Activated CD4-positive, alpha-beta T cell treated with anti-CD3 and anti-CD28 coated beads, Interleukin-2, amount 10 ng/mL, durations not matched to agents 7 days and 5 days (primary cell): ENCODE measurements at regions of chr3 and their contacts with region 1.

Region 1: GRCh38 chr3:52231502-52232293 is 6.3 kb upstream of the TLR9 start:
- DNase-seq: peak; percentile 78
- H3K4me3 Mint-ChIP-seq: peak overlapping the region; percentile 6
- H3K27ac Mint-ChIP-seq: peak overlapping the region; percentile 66
- H3K4me1 Mint-ChIP-seq: peaks cover 58% of the 10 kb centered on the region
- H3K27me3 Mint-ChIP-seq: no peaks in the 10 kb centered on the region

Region 2: DNA sequence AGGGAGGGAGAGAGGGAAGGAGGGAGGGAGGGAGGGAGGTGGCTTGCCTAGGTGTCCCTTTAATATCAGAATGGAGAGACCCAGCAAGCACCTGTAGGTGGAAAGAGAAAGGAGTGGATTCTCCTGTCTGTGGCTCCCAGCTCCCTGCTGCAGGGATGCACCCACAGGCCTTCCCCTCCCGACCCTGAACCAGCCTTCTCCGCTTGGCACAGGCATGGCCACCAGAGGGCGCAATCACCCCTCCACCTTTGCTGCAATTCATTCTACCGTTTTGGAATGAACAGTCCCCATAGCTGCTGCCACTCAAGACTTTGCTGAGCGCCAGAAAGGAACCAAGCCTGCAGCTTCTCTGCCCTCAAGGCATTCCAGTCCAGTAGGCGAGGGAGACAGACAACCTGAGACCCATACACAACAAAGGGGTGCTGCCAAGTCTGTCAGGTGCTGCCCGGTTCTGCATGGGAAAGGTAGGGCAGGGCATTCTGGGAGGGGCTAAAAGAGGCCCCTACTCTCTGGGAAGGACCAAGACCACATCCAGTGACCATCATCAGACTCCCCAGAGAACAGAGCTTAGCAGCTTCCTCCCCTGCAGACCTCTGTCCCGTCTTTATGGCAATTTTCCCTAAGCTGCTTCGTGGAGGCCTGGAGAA is 11.2 kb before region 1 on chr3:
- CTCF ChIA-PET with region 1: interaction called, 84 read pairs
- POLR2A ChIA-PET with region 1: no interaction called
- DNase-seq: peak; percentile 91
- H3K4me3 Mint-ChIP-seq: peak overlapping the region; percentile 48
- H3K27ac Mint-ChIP-seq: peak overlapping the region; percentile 80
- H3K4me1 Mint-ChIP-seq: peaks cover 95% of the 10 kb centered on the region
- H3K27me3 Mint-ChIP-seq: no peaks in the 10 kb centered on the region

Region 3: GRCh38 chr3:52259035-52259434 is 27.3 kb after region 1 on chr3:
- CTCF ChIA-PET with region 1: interaction called, 17 read pairs
- POLR2A ChIA-PET with region 1: no interaction called
- DNase-seq: no peak
- H3K4me3 Mint-ChIP-seq: no peak overlapping the region
- H3K27ac Mint-ChIP-seq: no peak overlapping the region
- H3K4me1 Mint-ChIP-seq: peaks cover 95% of the 10 kb centered on the region
- H3K27me3 Mint-ChIP-seq: no peaks in the 10 kb centered on the region

Region 4: DNA sequence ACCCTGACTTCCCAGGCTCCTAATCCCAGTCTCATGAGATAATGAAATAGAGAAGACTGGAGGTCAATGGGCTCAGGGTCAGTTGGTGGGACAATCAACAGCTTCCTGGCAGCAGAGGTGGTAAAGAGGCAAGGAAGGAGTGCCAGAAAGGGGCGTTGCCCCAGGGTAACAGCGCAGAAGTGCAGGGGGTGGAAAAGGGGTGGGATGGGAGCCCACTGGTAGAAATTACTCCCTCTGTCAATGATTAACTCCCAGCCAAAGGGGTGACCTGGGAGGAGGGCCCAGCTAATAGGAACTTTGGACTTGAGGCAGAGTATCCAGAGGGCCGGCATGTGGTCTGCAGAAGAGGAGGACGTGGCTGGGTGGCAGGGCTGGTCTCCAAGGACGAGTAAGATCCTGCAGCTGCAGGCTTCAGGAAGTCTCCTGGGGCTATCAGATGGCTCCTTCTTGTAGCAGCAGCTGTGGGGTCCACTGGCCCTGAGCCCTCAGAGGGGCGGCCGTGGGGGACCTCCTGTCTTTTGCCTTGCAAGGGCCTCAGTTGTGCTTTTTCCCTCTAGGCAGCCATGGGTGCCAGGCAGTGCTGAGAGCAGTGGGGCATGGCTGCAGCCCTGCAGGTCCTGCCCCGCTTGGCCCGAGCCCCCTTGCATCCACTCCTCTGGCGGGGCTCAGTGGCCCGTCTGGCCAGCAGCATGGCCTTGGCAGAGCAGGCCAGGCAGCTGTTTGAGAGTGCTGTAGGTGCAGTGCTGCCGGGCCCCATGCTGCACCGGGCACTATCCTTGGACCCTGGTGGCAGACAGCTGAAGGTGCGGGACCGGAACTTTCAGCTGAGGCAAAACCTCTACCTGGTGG is 58.3 kb after region 1 on chr3:
- CTCF ChIA-PET with region 1: interaction called, 14 read pairs
- POLR2A ChIA-PET with region 1: no interaction called
- DNase-seq: no peak
- H3K4me3 Mint-ChIP-seq: peak overlapping the region; percentile 19
- H3K27ac Mint-ChIP-seq: peak overlapping the region; percentile 60
- H3K4me1 Mint-ChIP-seq: peaks cover 37% of the 10 kb centered on the region
- H3K27me3 Mint-ChIP-seq: no peaks in the 10 kb centered on the region

Region 5: DNA sequence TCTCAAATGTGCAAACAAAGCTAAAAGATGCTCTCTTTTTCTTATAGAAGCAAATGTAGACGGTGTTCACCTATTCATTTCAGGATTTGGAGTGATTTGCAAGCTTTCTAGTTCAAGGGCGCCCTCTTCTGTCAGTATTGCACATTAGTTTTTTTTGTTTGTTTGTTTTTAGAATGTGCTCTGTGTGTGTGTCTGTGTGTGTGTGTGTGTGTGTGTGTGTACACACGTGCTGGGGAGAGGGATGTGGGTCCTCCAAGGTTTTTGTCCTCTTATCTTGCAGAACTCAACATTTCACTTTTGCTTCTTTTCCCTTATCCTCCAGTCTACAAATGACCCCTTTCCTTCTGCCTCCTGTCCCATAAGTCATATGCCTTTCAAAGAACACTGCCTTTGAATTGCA is 107.9 kb after region 1 on chr3:
- CTCF ChIA-PET with region 1: interaction called, 42 read pairs
- POLR2A ChIA-PET with region 1: no interaction called
- DNase-seq: peak; percentile 77
- H3K4me3 Mint-ChIP-seq: no peak overlapping the region
- H3K27ac Mint-ChIP-seq: no peak overlapping the region
- H3K4me1 Mint-ChIP-seq: peaks cover 13% of the 10 kb centered on the region
- H3K27me3 Mint-ChIP-seq: no peaks in the 10 kb centered on the region